ENCODE measurements at regions of chr2 and their contacts with region 1.

Region 1: DNA sequence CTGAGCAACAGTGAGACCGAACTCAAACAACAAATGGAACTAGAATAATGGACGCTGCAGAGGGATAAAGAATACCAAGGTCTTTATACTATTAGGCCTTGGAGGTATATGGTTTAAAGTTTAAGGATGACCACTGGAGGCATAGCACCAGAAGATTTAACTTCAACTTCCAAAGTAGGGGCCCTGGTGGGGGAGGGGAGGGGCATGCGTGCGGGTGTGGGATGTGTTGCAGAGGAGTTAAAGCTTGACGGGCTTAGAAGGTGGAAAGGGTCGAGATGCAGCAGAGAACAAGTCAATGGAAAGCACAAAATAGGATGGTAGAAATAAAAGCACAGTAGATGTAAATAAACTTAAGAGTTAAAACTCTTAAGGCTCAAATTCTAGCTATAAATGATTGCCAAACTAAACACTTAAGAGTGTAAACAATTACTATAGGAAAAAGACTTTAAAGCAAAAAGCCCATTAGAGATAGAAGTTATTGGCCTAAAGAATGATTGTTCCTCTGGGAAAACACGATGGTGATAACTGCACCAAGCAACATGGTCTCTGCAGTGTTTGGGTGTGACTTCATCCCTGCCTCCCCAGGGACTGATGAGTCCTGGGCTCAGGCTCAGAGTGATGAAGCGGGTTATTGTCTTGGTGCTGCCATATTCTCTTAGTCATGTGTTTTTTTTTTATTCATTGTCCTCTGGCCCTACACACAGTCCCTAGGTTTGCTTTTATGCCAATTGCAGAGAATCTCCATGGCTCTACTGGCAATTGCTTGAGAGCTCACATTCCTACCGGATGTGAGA is 13.0 kb downstream of the RRM2 start:
- DNase-seq: peak; percentile 86
- H3K4me3 ChIP-seq: no peak overlapping the region
- H3K27ac ChIP-seq: no peak overlapping the region
- H3K4me1 ChIP-seq: no peaks in the 10 kb centered on the region
- H3K27me3 ChIP-seq: no peaks in the 10 kb centered on the region

Region 2: DNA sequence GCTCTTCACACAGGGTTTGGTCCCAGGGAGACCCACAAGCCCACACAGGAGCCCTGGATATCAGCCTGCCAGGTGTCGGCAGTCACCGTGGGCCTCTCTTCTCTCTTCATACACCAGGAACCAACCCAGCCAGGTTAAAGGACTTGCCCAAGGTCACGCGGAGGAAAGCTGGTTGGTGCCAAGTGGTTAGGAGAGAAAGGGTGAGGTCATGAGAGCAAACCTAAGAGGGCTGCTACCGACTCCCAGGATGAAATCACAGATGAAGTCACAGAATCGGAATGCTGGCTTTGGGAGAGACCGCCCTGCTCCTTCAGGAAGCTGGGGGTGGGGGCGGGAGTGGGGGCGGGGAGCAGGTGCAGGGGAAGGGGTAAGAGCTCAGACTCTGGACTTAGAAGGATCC is 315.5 kb before region 1 on chr2:
- in situ Hi-C with region 1: no loop called
- DNase-seq: peak; percentile 55
- H3K4me3 ChIP-seq: no peak overlapping the region
- H3K27ac ChIP-seq: no peak overlapping the region
- H3K4me1 ChIP-seq: no peaks in the 10 kb centered on the region
- H3K27me3 ChIP-seq: no peaks in the 10 kb centered on the region

Region 3: GRCh38 chr2:10302479-10303180 is 167.1 kb after region 1 on chr2 and contains the start of gene HPCAL1:
- in situ Hi-C with region 1: no loop called
- DNase-seq: peak; percentile 91
- H3K4me3 ChIP-seq: peak within 1 kb of the TSS; percentile 90
- H3K27ac ChIP-seq: no peak within 1 kb of the TSS
- H3K4me1 ChIP-seq: peaks cover 27% of the 10 kb centered on the region
- H3K27me3 ChIP-seq: no peaks in the 10 kb centered on the region
- total RNA-seq, gene HPCAL1: 36.5 and 65.4 TPM in 2 replicates

Region 4: GRCh38 chr2:10412384-10412783 is 276.9 kb after region 1 on chr2:
- in situ Hi-C with region 1: loop called (anchors 10 kb)
- DNase-seq: peak; percentile 63
- H3K4me3 ChIP-seq: no peak overlapping the region
- H3K27ac ChIP-seq: no peak overlapping the region
- H3K4me1 ChIP-seq: peaks cover 24% of the 10 kb centered on the region
- H3K27me3 ChIP-seq: no peaks in the 10 kb centered on the region

Measured in GM23248 (cell line).